ENCODE measurements at regions of chr17 and their contacts with region 1.

Region 1: GRCh38 chr17:32783602-32784001 is 93.3 kb downstream of the MYO1D start:
- DNase-seq: peak; percentile 71
- ATAC-seq: peak; percentile 79
- H3K4me3 ChIP-seq: no peak overlapping the region
- H3K27ac ChIP-seq: no peak overlapping the region
- H3K4me1 ChIP-seq: no peaks in the 10 kb centered on the region
- H3K27me3 ChIP-seq: no peaks in the 10 kb centered on the region
- CTCF ChIP-seq: peak; percentile 80

Region 2: DNA sequence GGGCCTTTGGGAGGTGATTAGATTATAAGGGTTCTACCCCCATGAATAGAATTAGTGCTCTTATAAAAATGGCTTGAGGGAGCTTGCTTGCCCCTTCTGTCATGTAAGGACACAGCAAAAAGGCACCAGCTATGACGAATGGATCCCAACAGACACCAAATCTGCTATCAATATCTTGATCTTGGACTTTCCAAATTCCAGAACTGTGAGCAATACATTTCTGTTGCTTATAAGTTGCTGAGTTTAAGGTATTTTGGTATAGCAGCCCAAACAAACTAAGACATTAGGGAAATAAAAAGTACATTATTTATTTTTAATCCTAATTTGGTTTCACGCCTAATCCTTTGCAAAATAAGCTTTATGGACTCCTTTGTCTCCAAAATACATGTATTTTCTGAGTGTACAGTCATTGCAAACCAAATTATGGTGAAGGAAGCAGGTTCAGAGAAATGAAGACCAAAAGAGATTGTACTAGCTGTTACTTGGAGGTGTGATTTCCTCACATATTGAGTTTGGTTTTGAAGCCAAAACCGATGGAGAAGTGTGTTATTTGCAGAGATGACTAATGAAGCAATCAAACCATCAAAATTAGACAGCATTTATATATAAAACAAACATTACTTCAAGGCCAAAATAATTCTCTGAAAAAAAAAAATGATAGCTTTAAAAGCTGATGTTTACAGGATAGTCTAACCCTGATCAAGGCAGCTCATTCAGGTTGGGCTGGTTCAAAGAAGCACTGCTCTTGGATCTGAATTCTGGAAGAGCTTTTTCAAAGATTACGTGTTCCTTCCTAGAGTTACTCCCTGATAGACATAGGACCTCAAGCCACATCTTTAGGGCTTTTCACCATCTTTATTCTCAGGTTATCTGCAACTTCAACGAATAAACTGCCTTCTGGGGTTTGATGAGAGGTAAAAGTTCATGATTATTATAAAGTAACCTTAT is 21.7 kb after region 1 on chr17:
- CTCF ChIA-PET with region 1: interaction called, 4 read pairs
- POLR2A ChIA-PET with region 1: no interaction called
- intact Hi-C with region 1: loop called (anchors 1 kb)
- DNase-seq: peak; percentile 62
- ATAC-seq: peak; percentile 19
- H3K4me3 ChIP-seq: no peak overlapping the region
- H3K27ac ChIP-seq: peak overlapping the region; percentile 73
- H3K4me1 ChIP-seq: peaks cover 46% of the 10 kb centered on the region
- H3K27me3 ChIP-seq: no peaks in the 10 kb centered on the region
- CTCF ChIP-seq: no peak

Region 3: DNA sequence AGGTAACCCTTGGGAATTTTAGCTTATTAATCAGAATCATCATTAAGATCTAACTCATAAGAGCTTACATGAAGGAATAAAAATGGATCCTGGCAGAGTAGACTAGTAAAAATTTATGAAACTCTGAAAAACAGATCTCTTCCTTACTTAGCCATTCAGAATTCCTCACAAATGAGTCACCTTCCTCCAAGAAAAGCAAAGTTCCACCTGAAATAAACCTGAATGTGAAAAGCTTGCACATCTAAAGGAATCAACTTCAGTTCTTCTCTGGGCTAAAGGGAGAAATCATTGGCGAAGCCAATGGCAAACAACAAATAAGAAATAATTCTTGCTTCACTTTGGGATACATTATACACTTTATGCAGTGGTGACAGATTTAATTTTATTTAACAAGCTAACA is 70.6 kb after region 1 on chr17:
- CTCF ChIA-PET with region 1: no interaction called
- POLR2A ChIA-PET with region 1: no interaction called
- intact Hi-C with region 1: loop called (anchors 5 kb)
- DNase-seq: peak; percentile 63
- ATAC-seq: peak; percentile 73
- H3K4me3 ChIP-seq: peak overlapping the region; percentile 39
- H3K27ac ChIP-seq: peak overlapping the region; percentile 65
- H3K4me1 ChIP-seq: peaks cover 32% of the 10 kb centered on the region
- H3K27me3 ChIP-seq: no peaks in the 10 kb centered on the region
- CTCF ChIP-seq: no peak

Region 4: GRCh38 chr17:32909787-32910369 is 126.3 kb after region 1 on chr17:
- CTCF ChIA-PET with region 1: interaction called, 9 read pairs
- POLR2A ChIA-PET with region 1: no interaction called
- intact Hi-C with region 1: loop called (anchors 1 kb)
- DNase-seq: peak; percentile 74
- ATAC-seq: peak; percentile 54
- H3K4me3 ChIP-seq: no peak overlapping the region
- H3K27ac ChIP-seq: no peak overlapping the region
- H3K4me1 ChIP-seq: peaks cover 12% of the 10 kb centered on the region
- H3K27me3 ChIP-seq: no peaks in the 10 kb centered on the region
- CTCF ChIP-seq: peak; percentile 66

Region 5: DNA sequence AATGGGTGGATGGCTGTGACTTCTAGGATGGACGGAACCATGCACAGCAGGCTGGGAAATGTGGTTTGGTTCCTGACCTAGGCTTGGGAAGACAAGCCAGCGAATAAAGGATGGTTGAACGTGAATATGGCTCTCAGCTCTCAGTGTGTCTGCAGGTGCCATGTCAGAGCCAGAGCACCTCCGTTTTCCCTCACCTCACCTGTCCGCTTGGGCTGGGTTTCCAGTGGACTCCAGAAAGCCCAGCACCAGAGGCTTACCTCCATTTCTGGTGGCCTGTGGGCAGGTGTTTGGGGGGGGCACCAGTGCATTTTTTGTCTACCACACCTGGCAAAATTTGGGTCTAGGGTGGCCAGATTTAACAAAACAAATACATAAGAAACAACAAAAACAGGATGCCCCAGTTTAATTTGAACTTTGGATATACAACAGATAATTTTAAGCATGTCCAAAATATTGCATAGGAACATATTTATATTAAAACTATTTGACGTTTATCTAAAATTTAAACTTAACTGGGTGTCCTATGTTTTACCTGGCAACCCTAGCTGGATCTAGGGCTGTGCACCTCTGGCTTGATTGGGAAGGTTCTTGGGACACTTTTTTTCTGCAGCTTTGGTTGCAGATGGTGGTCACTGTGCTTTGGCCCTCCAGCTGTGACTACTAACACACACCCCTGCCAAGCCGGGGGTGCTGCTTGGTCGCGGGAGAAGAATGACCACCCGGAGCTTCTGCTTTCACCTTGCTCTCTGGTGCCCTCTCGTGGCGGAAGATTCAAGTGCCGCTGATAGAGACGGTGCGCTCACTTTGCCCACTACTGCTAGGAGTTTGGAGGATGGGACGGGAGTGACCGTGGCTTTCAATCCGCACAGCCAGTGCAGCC is 214.4 kb after region 1 on chr17:
- CTCF ChIA-PET with region 1: no interaction called
- POLR2A ChIA-PET with region 1: no interaction called
- intact Hi-C with region 1: loop called (anchors 5 kb)
- DNase-seq: peak; percentile 76
- ATAC-seq: peak; percentile 90
- H3K4me3 ChIP-seq: peak overlapping the region; percentile 60
- H3K27ac ChIP-seq: no peak overlapping the region
- H3K4me1 ChIP-seq: peaks cover 7% of the 10 kb centered on the region
- H3K27me3 ChIP-seq: no peaks in the 10 kb centered on the region
- CTCF ChIP-seq: peak; percentile 82

Measured in PC-3 (cell line).